ENCODE measurements at regions of chr10 and their contacts with region 1.

Region 1: GRCh38 chr10:67175354-67175753 is 249.5 kb downstream of the LRRTM3 start:
- DNase-seq: no peak
- H3K4me3 ChIP-seq: no peak overlapping the region
- CTCF ChIP-seq: no peak
- POLR2A ChIP-seq: no peak

Region 2: DNA sequence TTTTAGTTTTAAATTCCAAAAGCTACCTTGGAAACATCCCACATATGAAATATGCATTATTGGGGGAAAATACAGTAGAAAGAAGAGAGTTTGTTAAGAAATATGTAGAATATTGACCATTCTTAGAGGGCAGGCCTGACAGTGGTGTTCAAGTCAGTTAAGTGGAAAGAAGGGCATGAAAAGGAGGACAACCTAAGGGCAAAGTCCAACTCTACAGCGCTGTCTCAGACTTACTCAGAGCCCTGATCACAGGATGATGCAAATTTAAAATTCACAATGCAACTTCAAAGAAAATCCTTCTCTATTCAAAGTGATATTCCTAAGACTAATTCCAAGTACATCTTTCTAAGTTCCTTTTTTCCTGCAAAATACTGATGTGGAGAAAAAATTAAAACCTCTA is 388.6 kb before region 1 on chr10:
- intact Hi-C with region 1: loop called (anchors 5 kb)
- DNase-seq: no peak
- H3K4me3 ChIP-seq: no peak overlapping the region
- CTCF ChIP-seq: no peak
- POLR2A ChIP-seq: no peak

Region 3: DNA sequence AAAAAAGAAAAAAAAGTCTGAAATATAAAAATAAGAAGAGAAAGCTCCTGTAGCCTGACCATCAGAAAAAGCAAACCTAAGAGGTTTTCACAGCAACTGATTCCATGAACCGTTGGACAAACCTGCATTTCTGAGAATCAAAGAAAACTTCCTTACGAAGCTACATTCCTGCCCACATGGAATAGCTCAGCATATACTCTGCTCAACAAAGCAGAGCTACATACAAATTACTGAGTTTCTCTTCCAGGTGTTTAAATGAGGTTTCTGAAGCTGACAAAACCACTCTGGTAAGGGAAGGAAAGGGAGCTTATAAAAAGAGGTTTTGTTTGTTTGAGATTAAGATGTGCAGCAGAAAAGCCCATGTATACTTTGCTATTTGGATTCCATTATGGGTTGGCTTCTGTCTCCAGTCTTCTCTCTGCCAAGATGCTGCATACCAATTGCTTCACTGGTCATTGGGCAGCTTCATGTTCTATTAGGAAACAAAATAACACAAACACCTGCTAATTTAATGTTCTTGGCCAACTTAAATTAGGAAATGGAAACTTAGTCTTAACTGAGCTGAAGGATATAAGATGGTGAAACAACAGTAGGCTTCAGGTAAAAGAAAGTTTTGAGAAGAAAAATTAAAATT is 64.6 kb after region 1 on chr10:
- intact Hi-C with region 1: no loop called
- DNase-seq: no peak
- H3K4me3 ChIP-seq: no peak overlapping the region
- CTCF ChIP-seq: no peak
- POLR2A ChIP-seq: no peak